Panc1 (cell line): ENCODE measurements at regions of chr1 and their contacts with region 1.

Region 1: DNA sequence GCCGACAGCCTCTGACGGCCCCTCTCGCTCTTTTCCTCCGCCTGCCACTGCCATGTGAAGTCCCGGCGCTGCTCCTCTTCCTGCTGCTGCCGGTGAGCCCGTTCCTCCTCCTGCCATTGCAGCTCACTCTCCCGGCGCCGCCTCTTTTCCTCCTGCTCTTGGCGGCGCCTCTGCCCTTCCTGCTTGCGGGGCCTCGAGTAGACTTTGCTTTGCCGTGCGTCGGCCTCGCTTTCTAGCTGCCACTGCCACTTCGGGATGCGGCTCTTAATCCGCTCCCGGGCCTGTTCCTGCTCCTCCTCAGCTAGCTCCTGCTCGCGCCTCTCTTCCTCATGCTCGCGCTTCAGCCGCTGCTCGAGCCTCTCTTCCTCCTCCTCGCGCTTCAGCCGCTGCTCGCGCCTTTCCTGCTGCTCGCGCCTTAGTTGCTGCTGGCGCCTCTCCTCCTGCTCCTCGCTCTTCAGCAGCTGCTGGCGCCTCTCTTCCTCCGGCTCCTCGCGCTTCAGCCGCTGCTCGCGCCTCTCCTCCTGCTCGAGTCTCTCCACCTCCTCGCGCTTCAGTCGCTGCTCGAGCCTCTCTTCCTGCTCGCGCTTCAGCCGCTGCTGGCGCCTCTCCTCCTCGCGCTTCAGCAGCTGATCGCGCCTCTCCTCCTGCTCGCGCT is 4.3 kb downstream of the TCHH start:
- DNase-seq: no peak
- ATAC-seq: peak; percentile 83
- H3K4me3 ChIP-seq: peak overlapping the region; percentile 53 to 78
- H3K27ac ChIP-seq: peak overlapping the region; percentile 66
- H3K4me1 ChIP-seq: peaks cover 5% of the 10 kb centered on the region; the same call in 1 of the 2 replicates
- H3K27me3 ChIP-seq: peaks cover 43% of the 10 kb centered on the region
- CTCF ChIP-seq: no peak

Region 2: DNA sequence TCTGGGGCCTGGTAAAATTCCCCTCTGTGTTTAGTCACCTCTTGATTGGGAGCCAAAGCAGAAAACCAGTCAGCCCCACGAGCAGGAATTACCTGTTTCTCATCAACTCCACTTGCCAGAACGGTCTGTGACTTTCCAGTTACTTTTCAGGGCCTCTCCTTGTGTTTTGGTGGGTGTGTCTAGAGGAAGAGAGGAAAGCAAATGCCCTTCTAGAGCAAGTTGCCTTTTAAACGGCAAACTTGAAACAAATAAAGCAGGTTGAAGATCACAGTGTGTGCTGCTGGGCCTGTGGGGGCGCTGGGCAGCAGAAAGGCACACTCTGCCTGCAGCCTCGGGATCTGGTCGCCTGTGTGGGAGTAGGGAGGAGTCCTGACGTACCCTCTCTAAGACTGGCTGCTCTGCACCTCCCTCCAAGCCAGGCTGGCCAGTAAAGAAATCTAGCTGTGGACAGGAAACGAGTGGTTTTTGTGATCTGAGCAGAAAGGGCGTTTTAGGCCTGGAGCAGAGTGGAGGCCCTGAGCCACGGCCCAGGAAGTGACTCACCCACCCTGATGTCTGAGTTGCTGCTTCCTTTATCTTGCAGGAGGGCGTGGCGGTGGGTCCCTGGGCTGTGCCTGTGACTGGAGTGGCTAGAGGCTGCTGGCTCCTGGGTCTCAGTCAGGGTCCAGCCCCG is 63.1 kb before region 1 on chr1:
- CTCF ChIA-PET with region 1: no interaction called
- POLR2A ChIA-PET with region 1: interaction called, 6 read pairs
- in situ Hi-C with region 1: no loop called
- intact Hi-C with region 1: loop called (anchors 5 kb)
- DNase-seq: peak; percentile 96
- ATAC-seq: peak; percentile 97
- H3K4me3 ChIP-seq: peak overlapping the region; percentile 34 to 59
- H3K27ac ChIP-seq: peak overlapping the region; percentile 99
- H3K4me1 ChIP-seq: peaks cover 23% of the 10 kb centered on the region
- H3K27me3 ChIP-seq: no peaks in the 10 kb centered on the region
- CTCF ChIP-seq: peak; percentile 75